Prostate gland (tissue), 2 donors: ENCODE measurements at regions of chr3 and their contacts with region 1.

Region 1: GRCh38 chr3:37855363-37855970 is 6.2 kb upstream of the CTDSPL start:
- DNase-seq: peak; percentile 78
- H3K4me3 ChIP-seq: no peak overlapping the region
- H3K27ac ChIP-seq: peak overlapping the region in 1 of 2 donors; percentile 17
- H3K4me1 ChIP-seq: no peaks in the 10 kb centered on the region
- H3K27me3 ChIP-seq: no peaks in the 10 kb centered on the region
- CTCF ChIP-seq: peak; percentile 92 to 98 (median 93)
- POLR2A ChIP-seq: no peak

Region 2: DNA sequence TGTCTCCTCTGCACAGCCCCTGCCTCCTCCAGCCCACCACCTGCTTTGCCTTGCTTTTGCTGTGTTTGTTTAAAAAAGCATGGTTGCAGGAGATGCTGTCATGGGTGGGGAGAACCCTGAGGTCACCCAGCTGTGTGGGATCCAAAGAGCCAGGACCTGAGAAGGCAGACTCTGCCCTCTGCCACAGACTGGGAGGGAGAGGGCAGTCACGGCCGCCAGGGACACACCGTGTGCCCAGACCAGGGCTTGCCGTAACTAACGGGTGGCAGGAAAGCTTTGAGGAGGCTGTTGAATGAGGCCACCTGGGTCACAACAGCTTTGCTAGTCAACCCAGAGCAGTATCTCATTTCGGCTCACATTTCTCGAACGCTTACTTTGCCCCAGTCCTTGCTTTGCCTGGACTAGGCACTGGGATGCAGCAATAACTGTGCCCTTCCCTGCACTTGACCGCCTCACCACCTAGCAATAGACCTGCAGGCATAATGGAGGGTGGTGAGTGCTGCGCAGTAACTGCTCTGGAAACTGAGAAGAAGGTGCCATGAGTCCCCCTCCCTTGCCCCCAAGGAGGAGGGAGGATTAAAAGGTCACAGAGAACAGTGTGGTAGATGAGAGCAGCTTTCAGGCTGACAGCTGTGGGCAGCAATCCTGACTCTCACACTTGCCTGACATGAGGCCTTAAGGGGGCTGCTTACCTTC is 48.8 kb before region 1 on chr3:
- intact Hi-C with region 1: no loop called
- DNase-seq: no peak
- H3K4me3 ChIP-seq: no peak overlapping the region
- H3K27ac ChIP-seq: no peak overlapping the region
- H3K4me1 ChIP-seq: peaks cover 4% of the 10 kb centered on the region
- H3K27me3 ChIP-seq: no peaks in the 10 kb centered on the region
- CTCF ChIP-seq: no peak
- POLR2A ChIP-seq: no peak

Region 3: DNA sequence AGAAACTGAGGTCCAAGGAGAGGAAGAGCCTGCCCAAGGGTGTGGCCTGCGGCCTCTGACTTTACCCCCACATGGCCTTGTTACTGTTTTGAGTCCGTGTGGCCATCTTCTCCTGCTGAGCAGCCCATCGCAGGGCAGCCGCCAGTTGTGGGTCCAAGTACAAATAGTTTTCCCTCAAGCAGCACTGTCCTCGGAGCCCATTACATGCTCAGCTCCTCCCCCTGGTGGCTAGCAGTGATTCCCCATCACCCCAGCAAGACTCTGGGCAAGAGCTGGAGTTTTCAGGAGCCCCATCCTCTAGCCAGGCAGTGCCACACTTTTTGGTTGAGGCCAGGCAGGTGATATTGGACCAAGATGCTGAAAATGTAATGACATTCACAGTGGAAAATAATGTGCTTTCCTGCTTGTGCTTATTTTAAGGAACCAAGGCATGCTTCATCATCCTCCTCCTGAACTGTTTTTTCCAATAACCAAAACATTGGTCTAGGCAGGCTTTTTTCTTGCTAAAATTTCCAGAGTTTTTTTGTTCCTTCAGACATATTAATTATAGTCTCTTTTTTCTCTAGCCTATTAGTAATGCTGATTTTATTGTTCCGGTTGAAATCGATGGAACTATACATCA is 111.9 kb after region 1 on chr3:
- intact Hi-C with region 1: loop called (anchors 1 kb)
- DNase-seq: peak; percentile 50
- H3K4me3 ChIP-seq: no peak overlapping the region
- H3K27ac ChIP-seq: no peak overlapping the region
- H3K4me1 ChIP-seq: no peaks in the 10 kb centered on the region
- H3K27me3 ChIP-seq: no peaks in the 10 kb centered on the region
- CTCF ChIP-seq: peak; percentile 13 to 84 (median 78)
- POLR2A ChIP-seq: no peak

Region 4: DNA sequence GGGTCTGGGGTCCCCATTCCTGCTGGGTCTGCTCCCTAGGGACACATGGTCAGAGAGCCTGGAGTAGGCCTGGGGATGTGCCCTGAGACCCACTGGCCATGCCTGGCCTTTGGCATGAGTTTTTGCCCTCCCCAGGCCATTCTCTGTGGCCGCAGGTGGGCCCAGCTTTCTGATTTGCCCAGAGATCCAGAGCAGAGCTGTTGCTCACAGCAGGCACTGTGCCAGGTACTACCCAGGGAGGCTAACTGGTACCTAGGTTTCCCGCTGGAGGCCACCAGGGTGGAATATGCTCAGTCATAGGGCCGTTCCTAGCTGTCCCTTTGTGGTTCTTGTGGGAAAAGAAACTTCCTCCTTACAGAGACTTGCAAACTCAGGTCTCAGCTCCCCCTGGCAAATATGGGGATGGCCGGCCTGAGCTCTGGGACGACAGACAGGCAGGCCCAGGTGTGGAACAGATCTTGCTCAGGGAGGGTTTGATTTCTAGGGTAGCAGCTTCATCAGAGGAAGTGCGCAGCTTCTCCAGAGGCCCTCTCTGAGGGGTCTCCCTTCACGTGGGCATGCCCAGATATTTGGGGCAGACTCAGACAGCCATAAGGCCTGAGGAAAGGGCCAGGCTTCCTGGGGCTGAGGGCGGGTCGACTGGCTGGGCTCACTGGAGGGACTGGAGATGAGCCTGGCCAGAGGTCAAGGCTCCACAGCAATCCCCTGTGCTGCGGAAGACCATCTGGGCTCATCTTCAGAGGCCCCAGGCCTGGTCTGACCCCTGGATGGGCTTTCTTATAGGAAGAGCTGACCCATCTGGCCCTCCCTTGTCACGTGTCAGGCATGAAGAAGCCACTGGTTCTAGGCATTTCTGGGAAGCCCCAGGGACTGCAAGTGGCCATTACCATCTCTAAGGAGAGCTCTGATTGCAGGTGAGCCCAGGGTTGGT is 253.4 kb after region 1 on chr3:
- intact Hi-C with region 1: no loop called
- DNase-seq: no peak
- H3K4me3 ChIP-seq: no peak overlapping the region
- H3K27ac ChIP-seq: no peak overlapping the region
- H3K4me1 ChIP-seq: no peaks in the 10 kb centered on the region
- H3K27me3 ChIP-seq: no peaks in the 10 kb centered on the region
- CTCF ChIP-seq: no peak
- POLR2A ChIP-seq: no peak